Heart left ventricle (tissue), 16 donors: ENCODE measurements at regions of chr12 and their contacts with region 1.

Region 1: GRCh38 chr12:50934981-50935807 is 17.1 kb upstream of the HIGD1C start:
- DNase-seq: no peak
- ATAC-seq: peak; percentile 28 to 74 (median 44)
- H3K4me3 ChIP-seq: peak overlapping the region in 3 of 12 donors; percentile 6 to 26 (median 25)
- H3K27ac ChIP-seq: peak overlapping the region; percentile 1 to 82 (median 62)
- H3K4me1 ChIP-seq: peaks cover 0 to 48% (median 21%) of the 10 kb centered on the region in 12 donors
- H3K27me3 ChIP-seq: no peaks in the 10 kb centered on the region
- CTCF ChIP-seq: no peak
- POLR2A ChIP-seq: no peak

Region 2: DNA sequence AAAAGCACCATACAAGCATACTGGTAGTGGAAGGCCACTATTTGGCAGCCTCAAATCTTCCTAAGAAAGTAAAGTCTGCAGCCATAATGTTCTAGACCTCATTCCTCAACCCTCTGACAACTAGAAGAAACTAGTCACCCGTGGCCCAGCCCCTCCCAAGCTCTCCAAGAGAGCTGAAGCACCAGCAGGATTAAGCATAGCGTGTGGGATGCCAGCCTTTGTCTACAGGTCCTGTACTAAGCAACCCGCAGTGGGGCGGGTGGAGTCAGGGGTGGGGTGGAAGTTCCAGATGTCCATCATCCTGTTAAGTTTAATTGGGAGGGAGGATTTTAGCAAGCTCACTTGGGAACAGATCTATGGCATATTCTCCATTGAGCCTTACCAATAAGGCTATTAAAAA is 76.8 kb after region 1 on chr12:
- intact Hi-C with region 1: loop called in 1 of 10 experiments (anchors 10 kb)
- DNase-seq: no peak
- ATAC-seq: peak in 2 of 4 donors; percentile 23 to 36
- H3K4me3 ChIP-seq: no peak overlapping the region
- H3K27ac ChIP-seq: peak overlapping the region in 1 of 12 donors; percentile 7
- H3K4me1 ChIP-seq: peaks cover 0 to 56% (median 8%) of the 10 kb centered on the region in 12 donors
- H3K27me3 ChIP-seq: no peaks in the 10 kb centered on the region
- CTCF ChIP-seq: no peak
- POLR2A ChIP-seq: no peak

Region 3: DNA sequence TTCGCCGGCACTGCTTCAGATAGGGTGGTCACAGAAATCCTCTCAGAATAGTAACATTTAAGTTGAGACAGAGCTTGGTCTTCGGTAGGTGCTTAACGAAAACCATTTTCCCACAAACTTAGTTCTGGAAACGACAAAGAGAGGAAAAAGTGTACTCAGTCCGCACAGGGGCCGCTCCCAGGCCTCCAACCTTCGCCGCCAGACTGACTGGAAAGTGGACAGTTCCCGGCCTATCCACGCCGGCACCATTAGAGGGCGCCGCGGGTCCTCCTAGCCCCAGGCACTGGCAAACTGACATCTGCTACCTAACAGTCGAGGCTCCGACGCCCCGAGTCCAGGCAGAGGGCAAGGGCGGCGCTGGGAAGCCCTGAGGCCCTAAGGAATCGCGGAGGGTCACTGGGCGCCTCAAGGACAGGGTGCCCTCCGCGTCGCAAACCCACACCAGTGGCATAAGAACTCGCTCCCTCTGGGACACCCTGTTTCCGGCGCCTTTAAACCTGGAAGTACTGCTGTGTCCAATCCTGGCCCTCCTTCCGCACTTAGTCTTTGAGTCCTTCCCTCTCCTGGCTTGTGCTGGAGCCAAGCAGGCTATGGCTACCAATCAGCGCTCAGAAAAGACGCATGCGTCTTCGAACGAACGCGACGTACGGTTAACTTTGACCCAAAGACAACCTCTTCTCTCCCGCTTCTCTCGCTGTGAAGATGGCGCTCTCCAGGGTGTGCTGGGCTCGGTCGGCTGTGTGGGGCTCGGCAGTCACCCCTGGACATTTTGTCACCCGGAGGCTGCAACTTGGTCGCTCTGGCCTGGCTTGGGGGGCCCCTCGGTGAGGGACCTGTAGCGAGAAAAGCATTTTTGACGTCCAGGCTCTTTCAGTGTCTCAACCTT is 112.7 kb after region 1 on chr12 and contains the start of gene LETMD1:
- intact Hi-C with region 1: no loop called
- DNase-seq: peak; percentile 92 to 97 (median 96)
- ATAC-seq: peak; percentile 100
- H3K4me3 ChIP-seq: peak within 1 kb of the TSS; percentile 58 to 93 (median 80)
- H3K27ac ChIP-seq: peak within 1 kb of the TSS; percentile 87 to 100 (median 96)
- H3K4me1 ChIP-seq: peaks cover 0 to 29% (median 19%) of the 10 kb centered on the region in 12 donors
- H3K27me3 ChIP-seq: no peaks in the 10 kb centered on the region
- CTCF ChIP-seq: peak; percentile 82 to 98 (median 94)
- POLR2A ChIP-seq: peak in 1 of 2 donors; percentile 65
- total RNA-seq, gene LETMD1: 13.6 to 34.4 (median 22.7) TPM